Activated T-helper 2 cell treated with anti-CD3 and anti-CD28 coated beads, Interferon-gamma antibody, Interleukin-2, Interleukin-4, amounts not matched to agents 10 μg/mL and 5 μg/mL and 100 μg/mL, durations not matched to agents 14 hours and 24 hours and 36 hours (primary cell): ENCODE measurements at regions of chr16 and their contacts with region 1.

Region 1: GRCh38 chr16:57535680-57536305 is 578 bp downstream of the CCDC102A start:
- DNase-seq: peak; percentile 89
- H3K4me3 Mint-ChIP-seq: peak overlapping the region; percentile 79
- H3K27ac Mint-ChIP-seq: peak overlapping the region; percentile 82
- H3K4me1 Mint-ChIP-seq: peaks cover 63% of the 10 kb centered on the region
- H3K27me3 Mint-ChIP-seq: no peaks in the 10 kb centered on the region

Region 2: GRCh38 chr16:57485916-57486857 is 49.6 kb before region 1 on chr16 and contains the start of gene DOK4:
- intact Hi-C with region 1: loop called (anchors 1 kb)
- DNase-seq: peak; percentile 66
- H3K4me3 Mint-ChIP-seq: peak within 1 kb of the TSS; percentile 77
- H3K27ac Mint-ChIP-seq: no peak within 1 kb of the TSS
- H3K4me1 Mint-ChIP-seq: peaks cover 8% of the 10 kb centered on the region
- H3K27me3 Mint-ChIP-seq: peaks cover 10% of the 10 kb centered on the region
- total RNA-seq, gene DOK4: 5.7 and 6.6 TPM in 2 replicates

Region 3: DNA sequence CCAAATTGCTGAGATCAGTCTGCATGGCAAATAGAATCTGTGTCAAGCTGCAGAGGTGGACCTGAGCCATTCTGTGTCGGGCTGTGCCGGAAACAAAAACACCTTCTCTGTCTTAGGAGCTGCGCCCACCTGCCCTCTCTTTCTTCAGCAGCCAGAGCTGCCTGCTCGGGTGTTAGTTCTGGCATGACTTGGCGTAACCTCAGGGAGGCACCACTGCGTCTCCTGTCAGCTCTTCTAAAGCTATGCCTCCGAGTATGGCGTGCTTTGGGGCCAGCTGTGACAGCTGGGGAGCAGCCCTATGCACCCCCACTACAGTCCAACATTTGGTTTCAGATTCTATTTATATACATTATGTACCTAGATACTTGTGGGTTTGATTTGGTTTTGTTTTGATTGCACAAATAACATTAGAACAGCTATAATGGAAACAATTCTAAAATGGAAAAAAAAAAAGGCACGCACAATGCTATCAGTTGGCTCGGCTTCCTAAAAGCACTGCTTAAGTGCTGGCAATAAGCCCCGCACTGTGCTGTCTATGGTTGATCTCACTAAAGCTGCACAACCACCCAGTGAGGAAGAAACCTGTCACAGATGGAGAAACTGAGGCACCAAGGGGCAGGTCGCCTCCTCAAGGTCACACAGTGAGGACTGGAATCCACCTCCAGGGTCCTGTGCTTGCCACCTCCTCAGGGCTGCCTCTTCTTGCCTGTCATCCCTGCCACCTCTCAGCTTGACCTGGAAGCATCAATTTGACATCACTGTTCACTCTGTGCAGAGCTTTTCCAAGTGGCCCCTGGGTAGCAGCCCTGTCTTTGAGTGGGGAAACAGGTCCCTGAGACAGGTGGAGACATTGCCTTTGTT is 74.0 kb after region 1 on chr16:
- intact Hi-C with region 1: loop called (anchors 2 kb)
- DNase-seq: peak; percentile 74
- H3K4me3 Mint-ChIP-seq: peak overlapping the region; percentile 58
- H3K27ac Mint-ChIP-seq: peak overlapping the region; percentile 87
- H3K4me1 Mint-ChIP-seq: peaks cover 60% of the 10 kb centered on the region
- H3K27me3 Mint-ChIP-seq: no peaks in the 10 kb centered on the region

Region 4: GRCh38 chr16:57648590-57649442 is 113.0 kb after region 1 on chr16:
- intact Hi-C with region 1: no loop called
- DNase-seq: peak; percentile 80
- H3K4me3 Mint-ChIP-seq: no peak overlapping the region
- H3K27ac Mint-ChIP-seq: peak overlapping the region; percentile 48
- H3K4me1 Mint-ChIP-seq: peaks cover 23% of the 10 kb centered on the region
- H3K27me3 Mint-ChIP-seq: peaks cover 2% of the 10 kb centered on the region

Region 5: GRCh38 chr16:57734925-57735754 is 199.3 kb after region 1 on chr16:
- intact Hi-C with region 1: loop called (anchors 2 kb)
- DNase-seq: peak; percentile 98
- H3K4me3 Mint-ChIP-seq: peak overlapping the region; percentile 97
- H3K27ac Mint-ChIP-seq: peak overlapping the region; percentile 96
- H3K4me1 Mint-ChIP-seq: peaks cover 15% of the 10 kb centered on the region
- H3K27me3 Mint-ChIP-seq: no peaks in the 10 kb centered on the region